ENCODE measurements at regions of chr2 and their contacts with region 1.

Region 1: DNA sequence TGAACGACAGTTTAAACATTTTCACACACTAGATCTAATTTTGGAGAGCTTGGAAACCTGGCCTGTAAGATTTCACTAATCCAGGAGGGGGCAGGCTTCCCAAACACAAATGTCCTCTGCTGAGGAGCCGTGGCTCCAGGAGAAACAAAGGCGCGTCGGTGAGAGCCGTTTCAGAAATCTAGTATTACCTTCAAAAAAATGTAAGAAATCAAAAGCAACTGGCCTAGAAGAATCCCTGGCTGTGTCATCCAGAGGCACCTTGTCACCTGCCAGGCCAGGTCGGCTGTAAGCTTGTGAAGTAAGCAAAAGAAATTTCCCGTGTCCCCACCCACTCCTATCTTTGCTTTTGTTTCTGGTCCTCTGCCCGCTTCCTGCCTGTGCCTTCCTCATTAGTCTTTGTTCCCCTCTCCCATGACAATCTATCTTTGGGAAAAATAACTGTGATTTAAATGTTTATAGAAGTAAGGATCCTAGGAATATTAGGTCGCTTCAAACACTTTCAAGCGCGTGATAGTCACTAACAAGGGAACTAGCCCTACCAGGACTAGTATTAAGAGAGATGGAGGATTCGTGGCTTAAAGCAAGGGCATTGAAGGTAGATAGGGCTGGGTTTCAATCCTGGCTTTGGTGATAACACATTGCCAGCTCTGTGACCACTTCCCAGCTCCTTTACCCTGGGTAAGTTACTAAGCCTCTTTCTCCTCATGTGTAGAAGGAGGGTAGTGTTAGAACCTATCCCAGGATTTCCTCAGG is 99.5 kb upstream of the STK39 start:
- DNase-seq: no peak
- H3K4me3 ChIP-seq: peak overlapping the region; percentile 51 to 62 (median 58)
- H3K27ac ChIP-seq: peak overlapping the region in 2 of 4 donors; percentile 55 to 58
- H3K4me1 ChIP-seq: peaks cover 0 to 6% (median 5%) of the 10 kb centered on the region in 4 donors
- H3K27me3 ChIP-seq: no peaks in the 10 kb centered on the region
- CTCF ChIP-seq: peak; percentile 87 to 89 (median 89)
- EP300 ChIP-seq: no peak
- POLR2A ChIP-seq: no peak

Region 2: GRCh38 chr2:168149150-168149974 is 197.5 kb before region 1 on chr2:
- intact Hi-C with region 1: no loop called
- DNase-seq: peak; percentile 47
- H3K4me3 ChIP-seq: no peak overlapping the region
- H3K27ac ChIP-seq: no peak overlapping the region
- H3K4me1 ChIP-seq: peaks cover 27 to 46% (median 38%) of the 10 kb centered on the region in 4 donors
- H3K27me3 ChIP-seq: no peaks in the 10 kb centered on the region
- CTCF ChIP-seq: no peak
- EP300 ChIP-seq: no peak
- POLR2A ChIP-seq: no peak

Region 3: DNA sequence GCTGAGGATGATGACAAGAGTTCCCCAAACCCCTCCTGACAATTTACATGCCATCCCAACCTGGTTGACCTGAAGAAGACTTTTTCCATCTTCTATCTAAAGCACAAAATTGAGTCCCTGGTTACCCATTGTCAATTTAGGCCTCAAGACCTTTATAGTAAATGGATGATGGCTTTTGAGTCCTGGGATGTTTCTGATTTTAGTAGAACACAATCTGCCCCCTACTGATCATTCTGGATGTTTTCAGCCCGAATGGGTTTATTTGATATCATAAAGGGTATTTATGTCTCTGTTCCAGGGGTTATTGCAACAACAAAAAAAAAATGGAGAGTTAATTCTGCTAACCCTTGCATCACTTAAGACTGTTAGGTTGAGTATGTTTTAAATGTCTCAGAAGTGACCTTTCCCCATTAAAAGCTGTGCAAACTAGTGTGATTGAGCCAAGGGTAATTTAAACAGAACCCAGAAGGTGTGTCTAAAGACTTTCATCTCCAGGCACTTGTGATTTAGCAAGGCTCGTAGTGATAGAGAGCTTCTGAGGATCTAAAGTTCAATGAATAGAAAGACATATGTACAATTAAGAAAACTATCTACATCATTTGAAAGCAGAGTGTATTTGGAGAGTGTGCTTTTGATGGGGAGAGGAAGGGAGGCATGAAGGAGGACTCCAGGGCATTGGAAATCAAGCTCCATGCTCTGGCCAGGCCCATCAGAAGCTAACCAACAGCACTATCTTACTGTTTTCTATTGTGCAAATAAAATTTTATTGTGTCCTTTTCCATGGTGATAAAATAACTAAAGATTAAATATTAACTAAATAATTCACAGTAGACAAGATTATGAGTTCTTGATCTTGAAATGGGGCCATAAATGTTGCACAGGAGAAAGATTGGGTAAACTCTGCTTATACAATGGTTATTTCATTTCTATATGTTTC is 358.9 kb after region 1 on chr2:
- intact Hi-C with region 1: loop called (anchors 2 kb)
- DNase-seq: no peak
- H3K4me3 ChIP-seq: no peak overlapping the region
- H3K27ac ChIP-seq: no peak overlapping the region
- H3K4me1 ChIP-seq: peaks cover 0 to 39% (median 18%) of the 10 kb centered on the region in 4 donors
- H3K27me3 ChIP-seq: no peaks in the 10 kb centered on the region
- CTCF ChIP-seq: peak in 2 of 3 experiments; percentile 17 to 25
- EP300 ChIP-seq: no peak
- POLR2A ChIP-seq: no peak

Region 4: DNA sequence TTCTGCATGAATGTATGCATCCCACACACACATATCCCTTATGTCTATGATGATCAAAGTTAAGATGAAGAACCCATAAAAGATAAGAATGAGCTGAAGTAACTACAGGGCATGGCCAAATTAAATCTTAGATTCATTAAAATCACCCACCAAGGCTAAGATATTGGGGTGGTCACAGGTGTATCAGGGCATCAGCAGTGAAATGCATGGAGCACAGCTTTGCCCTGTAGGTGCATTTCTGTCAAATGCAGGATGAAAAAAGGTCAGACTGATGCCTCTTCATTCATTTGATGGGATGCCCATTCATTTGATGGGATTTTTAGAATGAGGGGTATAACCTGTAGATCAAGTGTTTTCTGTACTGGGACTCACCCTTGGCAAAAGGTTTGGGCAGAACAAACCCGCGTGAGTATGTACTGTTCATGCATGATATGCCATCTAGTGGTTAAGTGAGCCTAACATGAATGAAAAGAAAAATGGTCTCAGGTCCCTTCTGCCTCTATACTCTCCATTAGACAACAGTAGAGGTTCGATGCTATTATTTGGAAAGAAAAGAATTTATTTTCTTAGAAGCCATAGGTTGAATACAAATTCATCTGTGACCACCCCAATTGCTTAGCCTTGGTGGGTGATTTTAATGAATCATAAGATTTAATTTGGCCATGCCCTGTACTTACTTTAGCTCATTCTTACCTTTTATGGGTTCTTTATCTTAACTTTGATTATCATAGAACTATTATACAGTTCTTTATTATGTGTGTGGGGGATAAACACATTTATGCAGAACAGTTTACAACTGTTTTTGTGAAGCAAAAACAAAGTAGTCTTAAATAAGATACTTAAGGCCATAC is 412.3 kb after region 1 on chr2:
- intact Hi-C with region 1: loop called (anchors 2 kb)
- DNase-seq: no peak
- H3K4me3 ChIP-seq: no peak overlapping the region
- H3K27ac ChIP-seq: no peak overlapping the region
- H3K4me1 ChIP-seq: peaks cover 0 to 4% (median 4%) of the 10 kb centered on the region in 4 donors
- H3K27me3 ChIP-seq: no peaks in the 10 kb centered on the region
- CTCF ChIP-seq: peak; percentile 57 to 69 (median 62)
- EP300 ChIP-seq: no peak
- POLR2A ChIP-seq: no peak

Region 5: DNA sequence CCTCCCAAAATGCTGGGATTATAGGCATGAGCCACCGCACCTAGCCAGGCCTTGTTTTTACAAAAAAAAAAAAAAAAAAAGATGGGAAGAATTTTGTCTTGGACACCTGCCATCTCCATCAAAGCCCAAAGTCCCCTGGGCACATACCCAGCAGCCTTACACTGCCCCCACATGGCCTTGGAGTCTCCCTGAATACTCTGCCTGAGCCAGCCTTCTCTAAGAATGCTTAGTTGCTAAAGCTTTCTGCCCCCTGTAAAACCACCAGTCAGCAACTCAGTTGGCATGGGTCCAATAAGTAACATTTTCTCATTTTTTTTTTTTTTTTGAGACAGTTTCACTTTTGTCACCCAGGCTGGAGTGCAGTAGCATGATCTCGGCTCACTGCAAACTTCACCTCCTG is 502.7 kb after region 1 on chr2:
- intact Hi-C with region 1: loop called (anchors 10 kb)
- DNase-seq: no peak
- H3K4me3 ChIP-seq: no peak overlapping the region
- H3K27ac ChIP-seq: no peak overlapping the region
- H3K4me1 ChIP-seq: peaks cover 0 to 4% (median 1%) of the 10 kb centered on the region in 4 donors
- H3K27me3 ChIP-seq: no peaks in the 10 kb centered on the region
- CTCF ChIP-seq: peak in 1 of 3 experiments; percentile 21
- EP300 ChIP-seq: no peak
- POLR2A ChIP-seq: no peak

Region 6: DNA sequence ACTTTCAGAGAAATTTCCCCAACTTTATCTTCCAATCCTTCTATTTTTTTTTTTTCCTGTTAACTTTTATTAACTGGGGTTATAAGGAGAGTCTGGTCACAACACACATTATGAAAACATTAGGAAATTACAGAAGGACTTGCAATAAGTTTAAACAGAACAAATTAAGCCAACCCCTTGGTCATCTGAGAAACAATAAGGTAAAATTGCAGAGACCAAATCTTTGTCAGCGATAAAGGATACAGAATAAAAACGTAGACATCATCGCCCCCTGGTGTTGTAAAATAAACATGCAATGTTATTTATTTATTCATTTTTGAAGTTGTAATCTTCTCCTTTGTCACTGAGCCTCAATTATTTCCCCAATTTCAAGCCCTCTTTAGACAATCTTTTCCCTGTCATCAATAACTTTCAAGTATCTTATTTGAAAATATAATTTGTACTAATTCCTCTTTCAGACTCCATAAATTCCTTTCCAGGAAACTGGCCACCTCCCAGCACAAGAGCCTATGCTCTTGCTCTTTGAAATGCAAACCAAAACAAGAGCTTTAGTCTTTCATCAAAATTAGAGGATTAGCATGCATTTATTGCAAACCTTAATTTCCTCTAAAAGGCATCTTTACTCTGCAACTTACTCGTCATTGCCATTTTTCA is 573.7 kb after region 1 on chr2:
- intact Hi-C with region 1: loop called (anchors 1 kb)
- DNase-seq: no peak
- H3K4me3 ChIP-seq: no peak overlapping the region
- H3K27ac ChIP-seq: no peak overlapping the region
- H3K4me1 ChIP-seq: no peaks in the 10 kb centered on the region
- H3K27me3 ChIP-seq: no peaks in the 10 kb centered on the region
- CTCF ChIP-seq: peak; percentile 44 to 66 (median 60)
- EP300 ChIP-seq: no peak
- POLR2A ChIP-seq: no peak